HepG2 (cell line): ENCODE measurements at regions of chr2 and their contacts with region 1.

Region 1: GRCh38 chr2:103959174-103960128 is 894.5 kb upstream of the POU3F3 start:
- DNase-seq: peak; percentile 47
- ATAC-seq: peak; percentile 99
- H3K4me3 ChIP-seq: no peak overlapping the region
- H3K27ac ChIP-seq: no peak overlapping the region
- H3K4me1 ChIP-seq: no peaks in the 10 kb centered on the region
- H3K27me3 ChIP-seq: no peaks in the 10 kb centered on the region; a peak in 1 of 5 replicates
- CTCF ChIP-seq: peak; percentile 77
- EP300 ChIP-seq: no peak
- POLR2A ChIP-seq: no peak
- RAD21 ChIP-seq: peak; percentile 39; the same call in 1 of the 2 replicates

Region 2: DNA sequence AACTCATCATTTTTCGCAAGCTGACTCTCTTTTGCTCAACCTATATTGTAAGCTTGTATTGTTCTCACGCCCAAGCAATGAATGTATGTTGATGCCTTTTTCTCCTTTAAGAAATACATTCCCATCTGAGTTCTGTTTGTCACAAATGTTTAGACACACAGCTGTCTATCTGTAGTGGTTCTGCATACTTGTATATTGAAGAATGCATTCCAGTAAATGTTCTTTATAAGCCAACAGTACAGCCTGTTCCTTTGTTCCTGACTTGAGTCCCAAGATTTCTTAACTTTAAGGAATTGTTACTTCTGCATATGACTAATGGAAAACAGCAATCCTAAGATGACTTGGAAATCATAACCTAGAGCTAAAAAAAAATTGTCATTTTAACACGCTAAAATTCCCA is 45.4 kb after region 1 on chr2:
- CTCF ChIA-PET with region 1: no interaction called
- POLR2A ChIA-PET with region 1: no interaction called
- in situ Hi-C with region 1: no loop called
- intact Hi-C with region 1: no loop called
- DNase-seq: no peak
- ATAC-seq: no peak
- H3K4me3 ChIP-seq: no peak overlapping the region
- H3K27ac ChIP-seq: no peak overlapping the region
- H3K4me1 ChIP-seq: no peaks in the 10 kb centered on the region
- H3K27me3 ChIP-seq: no peaks in the 10 kb centered on the region
- CTCF ChIP-seq: no peak
- EP300 ChIP-seq: no peak
- POLR2A ChIP-seq: no peak
- RAD21 ChIP-seq: no peak

Region 3: DNA sequence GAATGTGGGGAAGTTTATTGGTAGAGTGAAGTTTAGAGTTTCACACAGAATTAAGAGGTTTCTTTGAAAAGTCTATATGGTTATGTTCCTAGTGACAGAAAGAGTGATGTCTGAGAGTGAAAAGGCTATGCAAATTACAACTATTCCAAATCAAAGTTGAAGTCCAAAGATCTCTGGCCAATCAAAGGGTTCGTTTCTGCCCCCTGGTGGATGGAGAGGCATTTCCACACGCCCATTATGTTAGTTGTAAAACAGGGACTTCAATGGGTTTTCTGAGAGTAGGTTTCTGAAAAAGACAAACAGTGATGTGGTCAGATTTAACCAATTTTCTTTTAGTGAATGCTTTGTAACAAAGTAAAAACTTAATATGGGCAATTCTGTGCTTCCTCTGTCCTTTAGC is 452.9 kb after region 1 on chr2:
- CTCF ChIA-PET with region 1: no interaction called
- POLR2A ChIA-PET with region 1: no interaction called
- in situ Hi-C with region 1: no loop called
- intact Hi-C with region 1: loop called (anchors 1 kb)
- DNase-seq: peak; percentile 20
- ATAC-seq: peak; percentile 49; the same call in 2 of the 3 replicates
- H3K4me3 ChIP-seq: no peak overlapping the region
- H3K27ac ChIP-seq: no peak overlapping the region
- H3K4me1 ChIP-seq: peaks cover 13% of the 10 kb centered on the region
- H3K27me3 ChIP-seq: peaks cover 0 to 23% of the 10 kb centered on the region in 2 experiments; a peak in 2 of 5 replicates
- CTCF ChIP-seq: peak; percentile 50
- EP300 ChIP-seq: no peak
- POLR2A ChIP-seq: no peak
- RAD21 ChIP-seq: no peak

Region 4: GRCh38 chr2:104521247-104521646 is 561.8 kb after region 1 on chr2:
- CTCF ChIA-PET with region 1: no interaction called
- POLR2A ChIA-PET with region 1: no interaction called
- in situ Hi-C with region 1: no loop called
- intact Hi-C with region 1: loop called (anchors 1 kb)
- DNase-seq: peak; percentile 15
- ATAC-seq: peak; percentile 73
- H3K4me3 ChIP-seq: no peak overlapping the region
- H3K27ac ChIP-seq: no peak overlapping the region
- H3K4me1 ChIP-seq: no peaks in the 10 kb centered on the region
- H3K27me3 ChIP-seq: 0 out of 5 replicates have a peak, but pooled peaks cover 0 to 2% of the 10 kb centered on the region in 2 experiments
- CTCF ChIP-seq: peak; percentile 63
- EP300 ChIP-seq: no peak
- POLR2A ChIP-seq: no peak
- RAD21 ChIP-seq: no peak

Region 5: DNA sequence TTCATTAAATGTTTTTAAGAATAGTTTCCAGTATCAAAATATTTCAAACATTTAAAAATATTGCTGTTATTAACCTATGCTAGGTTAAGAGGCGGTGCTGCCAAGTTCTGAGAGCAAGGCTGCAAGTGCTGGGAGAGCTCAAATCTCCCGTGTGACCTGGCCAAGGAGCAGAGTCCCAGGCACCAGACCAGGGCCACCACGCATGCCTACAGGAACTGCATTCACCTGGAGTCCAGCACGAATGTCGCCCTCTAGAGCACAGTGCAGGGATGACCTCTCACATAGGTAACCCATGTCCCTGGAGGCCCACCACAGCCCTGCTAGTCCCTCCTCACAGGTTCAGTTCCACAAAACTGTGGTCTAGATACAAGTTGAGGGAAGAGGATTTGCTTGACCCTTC is 774.1 kb after region 1 on chr2:
- CTCF ChIA-PET with region 1: no interaction called
- POLR2A ChIA-PET with region 1: no interaction called
- in situ Hi-C with region 1: no loop called
- intact Hi-C with region 1: loop called (anchors 2 kb)
- DNase-seq: peak; percentile 41
- ATAC-seq: peak; percentile 100
- H3K4me3 ChIP-seq: no peak overlapping the region
- H3K27ac ChIP-seq: no peak overlapping the region
- H3K4me1 ChIP-seq: no peaks in the 10 kb centered on the region
- H3K27me3 ChIP-seq: no peaks in the 10 kb centered on the region; a peak in 1 of 5 replicates
- CTCF ChIP-seq: peak; percentile 71
- EP300 ChIP-seq: no peak
- POLR2A ChIP-seq: no peak
- RAD21 ChIP-seq: peak; percentile 30; the same call in 1 of the 2 replicates

Region 6: DNA sequence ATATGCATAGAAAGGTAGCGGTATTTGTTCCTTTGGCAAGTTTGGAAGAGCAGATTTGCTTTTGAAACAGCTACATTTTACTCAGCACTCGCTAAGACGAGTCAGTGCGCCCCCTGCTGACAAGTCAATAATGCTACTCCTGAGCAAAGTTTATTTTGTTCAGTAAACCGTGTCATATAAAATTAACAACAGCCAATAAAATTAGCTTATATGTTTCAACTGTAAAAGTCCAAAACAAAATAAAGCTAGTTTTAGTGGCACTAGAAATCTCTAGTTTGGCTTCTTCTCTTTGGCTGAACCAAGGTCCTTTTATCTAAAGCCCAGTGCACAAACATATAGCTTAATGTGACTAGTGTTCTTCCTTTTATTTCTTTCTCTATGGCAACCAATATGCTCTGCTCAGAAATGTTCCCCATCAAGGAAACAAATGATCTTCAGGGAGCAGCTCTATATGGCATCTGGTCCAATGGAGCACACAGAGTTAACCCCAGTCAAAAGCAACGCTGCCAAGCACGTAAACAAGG is 890.2 kb after region 1 on chr2:
- CTCF ChIA-PET with region 1: interaction called, 3 read pairs
- POLR2A ChIA-PET with region 1: no interaction called
- in situ Hi-C with region 1: loop called (anchors 10 kb)
- intact Hi-C with region 1: no loop called
- DNase-seq: peak; percentile 47
- ATAC-seq: peak; percentile 59
- H3K4me3 ChIP-seq: no peak overlapping the region
- H3K27ac ChIP-seq: no peak overlapping the region
- H3K4me1 ChIP-seq: no peaks in the 10 kb centered on the region
- H3K27me3 ChIP-seq: peaks cover 10 to 83% of the 10 kb centered on the region in 2 experiments; a peak in 4 of 5 replicates
- CTCF ChIP-seq: peak; percentile 79
- EP300 ChIP-seq: no peak
- POLR2A ChIP-seq: no peak
- RAD21 ChIP-seq: peak; percentile 52

Region 7: DNA sequence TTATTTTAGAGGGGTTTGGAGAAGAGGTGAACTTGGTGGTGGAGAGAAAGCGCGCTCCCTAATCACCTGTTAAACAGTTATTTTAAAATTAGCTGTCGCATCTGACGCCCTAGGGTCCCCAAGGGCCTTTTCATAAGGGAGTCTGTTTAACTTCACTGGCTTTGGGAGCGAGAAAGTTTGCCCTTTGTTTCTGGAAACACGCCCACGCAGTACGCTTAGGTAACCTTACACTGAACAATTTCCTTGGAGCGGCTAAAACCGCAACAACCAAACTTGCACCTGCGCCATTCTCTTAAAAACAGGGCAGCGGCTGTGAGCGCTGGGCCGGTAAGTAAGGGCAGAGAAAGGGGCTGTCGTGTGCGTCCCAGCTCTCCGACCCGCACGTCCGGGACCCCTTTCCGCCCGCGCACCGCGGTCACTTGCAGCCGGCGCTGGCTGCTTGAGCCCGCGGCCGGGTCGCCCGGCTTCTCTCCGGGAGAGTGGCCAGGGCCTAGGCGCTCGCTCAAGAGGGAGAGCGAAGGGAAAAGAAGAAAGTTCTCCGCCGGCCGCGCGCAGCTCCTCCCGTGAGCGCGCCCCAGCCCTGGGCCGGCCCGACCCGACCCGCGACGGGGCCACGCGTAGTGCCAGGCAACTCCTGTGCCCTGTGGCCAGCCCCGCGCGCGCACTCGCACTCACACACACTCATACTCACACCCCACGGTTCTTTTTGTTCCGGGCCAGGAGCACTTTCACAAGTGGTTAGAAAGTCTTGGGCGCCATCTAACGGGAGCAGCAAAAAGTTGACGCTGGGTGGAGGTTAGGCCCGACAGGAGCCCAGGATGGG is 913.6 kb after region 1 on chr2:
- CTCF ChIA-PET with region 1: interaction called, 11 read pairs
- POLR2A ChIA-PET with region 1: no interaction called
- in situ Hi-C with region 1: no loop called
- intact Hi-C with region 1: loop called (anchors 1 kb)
- DNase-seq: peak; percentile 58
- ATAC-seq: peak; percentile 95
- H3K4me3 ChIP-seq: peak overlapping the region; percentile 52 to 70 (median 56); a peak in 4 of 6 replicates
- H3K27ac ChIP-seq: no peak overlapping the region
- H3K4me1 ChIP-seq: peaks cover 7% of the 10 kb centered on the region; the same call in 1 of the 2 replicates
- H3K27me3 ChIP-seq: peaks cover 9 to 65% of the 10 kb centered on the region in 2 experiments
- CTCF ChIP-seq: peak; percentile 86
- EP300 ChIP-seq: no peak
- POLR2A ChIP-seq: no peak
- RAD21 ChIP-seq: peak; percentile 85

Region 8: DNA sequence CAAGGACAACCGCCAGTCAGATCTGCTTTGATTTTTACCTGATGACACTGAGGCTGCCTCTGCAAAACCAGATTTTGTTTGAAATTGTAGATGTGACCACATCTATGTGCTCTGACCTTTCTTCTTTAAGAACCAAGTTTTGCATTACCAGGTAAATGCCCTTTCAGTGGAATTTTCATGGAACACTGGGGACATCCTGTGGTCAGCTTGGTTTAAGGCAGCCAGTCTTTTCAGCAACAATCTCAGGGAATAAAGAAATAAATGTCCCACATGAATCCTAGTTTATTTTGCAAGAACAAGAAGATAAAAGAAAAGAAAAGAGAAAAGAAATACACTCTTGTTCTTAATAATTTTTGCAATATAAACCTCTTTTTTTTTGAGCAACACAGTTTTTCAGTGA is 985.0 kb after region 1 on chr2:
- CTCF ChIA-PET with region 1: no interaction called
- POLR2A ChIA-PET with region 1: no interaction called
- in situ Hi-C with region 1: no loop called
- intact Hi-C with region 1: loop called (anchors 1 kb)
- DNase-seq: peak; percentile 21
- ATAC-seq: peak; percentile 66
- H3K4me3 ChIP-seq: no peak overlapping the region
- H3K27ac ChIP-seq: no peak overlapping the region
- H3K4me1 ChIP-seq: peaks cover 6% of the 10 kb centered on the region; the same call in 1 of the 2 replicates
- H3K27me3 ChIP-seq: peaks cover 0 to 14% of the 10 kb centered on the region in 2 experiments; a peak in 2 of 5 replicates
- CTCF ChIP-seq: peak; percentile 69
- EP300 ChIP-seq: no peak
- POLR2A ChIP-seq: no peak
- RAD21 ChIP-seq: peak; percentile 59